ENCODE measurements at regions of chr13 and their contacts with region 1.

Region 1: DNA sequence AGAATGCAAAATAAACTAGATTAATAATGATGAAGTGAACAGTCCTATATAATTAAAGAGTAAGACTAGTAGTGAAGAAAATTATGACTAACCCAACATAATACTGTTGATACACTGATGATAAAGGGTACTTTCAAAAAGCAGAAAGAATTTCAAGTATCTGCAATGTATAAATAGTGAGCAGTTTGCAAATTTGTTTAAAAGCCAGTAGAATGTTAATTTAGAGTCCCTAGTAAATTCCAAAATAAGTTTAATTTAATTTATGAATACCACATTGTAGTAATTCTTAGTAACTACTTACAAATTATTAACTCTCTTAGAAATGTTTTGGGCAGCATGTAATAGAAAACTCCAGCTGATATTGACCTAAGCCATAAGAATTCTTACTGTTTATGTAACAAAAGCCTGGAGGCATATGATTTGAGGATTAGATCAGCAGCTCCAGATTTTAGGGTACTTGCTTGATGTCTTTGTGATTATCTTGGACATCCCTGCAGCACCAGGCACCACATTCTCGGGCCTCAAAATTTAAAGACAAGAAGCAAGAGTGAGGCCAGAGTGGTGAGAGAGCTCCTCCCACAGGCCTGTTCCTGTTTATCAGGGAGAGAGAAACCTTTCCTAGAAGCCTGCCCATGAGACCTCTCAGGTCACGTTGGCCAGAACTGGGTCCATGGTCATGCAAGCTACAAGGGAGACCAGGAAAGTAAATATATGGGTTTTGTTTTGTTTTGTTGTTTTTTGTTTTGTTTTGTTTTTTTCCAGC is 67.6 kb upstream of the TDRD3 start:
- DNase-seq: peak; percentile 93
- H3K4me3 ChIP-seq: no peak overlapping the region
- H3K27ac ChIP-seq: peak overlapping the region; percentile 91
- H3K4me1 ChIP-seq: peaks cover 58% of the 10 kb centered on the region
- H3K27me3 ChIP-seq: no peaks in the 10 kb centered on the region
- CTCF ChIP-seq: peak; percentile 84

Region 2: DNA sequence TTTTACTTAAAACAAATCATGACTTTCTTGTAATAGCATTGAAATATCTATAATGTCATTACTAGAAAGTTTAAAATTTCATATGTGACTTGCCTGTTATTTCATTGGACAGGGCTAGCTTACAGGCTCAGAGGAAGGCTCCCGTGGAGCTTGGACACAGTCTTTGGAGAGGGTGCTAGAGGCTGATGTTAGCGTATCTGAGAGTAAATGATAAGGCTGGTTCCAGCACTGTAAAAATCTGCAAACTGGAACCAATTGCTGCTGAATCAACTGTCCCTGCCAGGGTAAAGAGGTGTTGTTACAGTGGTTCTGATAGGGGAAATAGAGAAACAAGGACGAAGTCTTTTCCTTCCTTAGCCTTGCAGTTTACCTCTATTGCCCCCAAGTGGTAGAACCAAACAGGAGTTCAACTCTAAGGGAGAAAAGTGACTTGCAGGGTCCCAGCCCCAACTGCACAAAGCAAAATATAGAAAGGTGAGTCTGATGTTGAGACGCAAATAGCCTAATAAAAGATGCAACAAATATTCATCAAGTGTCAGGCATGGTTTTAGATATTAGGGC is 1067.4 kb before region 1 on chr13:
- CTCF ChIA-PET with region 1: no interaction called
- POLR2A ChIA-PET with region 1: no interaction called
- intact Hi-C with region 1: no loop called
- DNase-seq: peak; percentile 58
- H3K4me3 ChIP-seq: no peak overlapping the region
- H3K27ac ChIP-seq: no peak overlapping the region
- H3K4me1 ChIP-seq: peaks cover 10% of the 10 kb centered on the region
- H3K27me3 ChIP-seq: no peaks in the 10 kb centered on the region
- CTCF ChIP-seq: peak; percentile 72

Region 3: GRCh38 chr13:59750860-59751259 is 578.5 kb before region 1 on chr13:
- CTCF ChIA-PET with region 1: no interaction called
- POLR2A ChIA-PET with region 1: no interaction called
- intact Hi-C with region 1: loop called (anchors 5 kb)
- DNase-seq: peak; percentile 93
- H3K4me3 ChIP-seq: peak overlapping the region; percentile 35
- H3K27ac ChIP-seq: peak overlapping the region; percentile 76
- H3K4me1 ChIP-seq: peaks cover 73% of the 10 kb centered on the region
- H3K27me3 ChIP-seq: no peaks in the 10 kb centered on the region
- CTCF ChIP-seq: peak; percentile 29; the same call in 1 of the 2 replicates

Region 4: GRCh38 chr13:59834801-59835200 is 494.6 kb before region 1 on chr13:
- CTCF ChIA-PET with region 1: no interaction called
- POLR2A ChIA-PET with region 1: no interaction called
- intact Hi-C with region 1: loop called (anchors 5 kb)
- DNase-seq: no peak
- H3K4me3 ChIP-seq: no peak overlapping the region
- H3K27ac ChIP-seq: peak overlapping the region; percentile 77
- H3K4me1 ChIP-seq: peaks cover 54% of the 10 kb centered on the region
- H3K27me3 ChIP-seq: no peaks in the 10 kb centered on the region
- CTCF ChIP-seq: no peak

Region 5: DNA sequence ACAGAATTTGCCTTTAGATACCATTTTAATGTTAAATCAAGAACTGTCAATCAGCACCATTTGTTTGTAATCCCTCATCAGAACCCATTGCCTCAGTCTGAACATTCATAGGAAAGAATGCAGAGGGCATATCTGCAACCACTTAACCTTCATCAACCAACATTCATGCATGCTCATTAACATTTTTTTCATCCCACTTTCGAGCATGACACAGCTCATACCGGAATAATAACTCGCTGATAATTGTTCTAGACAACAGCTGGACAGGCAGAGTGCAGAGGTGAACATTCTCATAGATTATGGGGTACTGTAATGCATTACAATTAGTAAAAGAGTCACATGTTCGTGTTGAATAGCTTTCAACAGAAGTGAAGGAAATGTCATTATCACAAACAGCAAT is 382.5 kb before region 1 on chr13:
- CTCF ChIA-PET with region 1: interaction called, 3 read pairs
- POLR2A ChIA-PET with region 1: interaction called, 3 read pairs
- intact Hi-C with region 1: loop called (anchors 2 kb)
- DNase-seq: peak; percentile 78
- H3K4me3 ChIP-seq: no peak overlapping the region
- H3K27ac ChIP-seq: peak overlapping the region; percentile 86
- H3K4me1 ChIP-seq: peaks cover 60% of the 10 kb centered on the region
- H3K27me3 ChIP-seq: no peaks in the 10 kb centered on the region
- CTCF ChIP-seq: no peak

Region 6: GRCh38 chr13:60226507-60226906 is 102.9 kb before region 1 on chr13:
- CTCF ChIA-PET with region 1: no interaction called
- POLR2A ChIA-PET with region 1: no interaction called
- intact Hi-C with region 1: no loop called
- DNase-seq: no peak
- H3K4me3 ChIP-seq: no peak overlapping the region
- H3K27ac ChIP-seq: no peak overlapping the region
- H3K4me1 ChIP-seq: peaks cover 21% of the 10 kb centered on the region
- H3K27me3 ChIP-seq: no peaks in the 10 kb centered on the region
- CTCF ChIP-seq: 0 out of 2 replicates have a peak, but pooled peaks have one; percentile 15